CD8-positive, alpha-beta memory T cell (primary cell): ENCODE measurements at regions of chr20 and their contacts with region 1.

Region 1: GRCh38 chr20:57432874-57433491 is 41.8 kb downstream of the RBM38 start:
- DNase-seq: peak; percentile 45 to 81 (median 75)
- H3K4me3 ChIP-seq: peak overlapping the region; percentile 71
- H3K4me3 Mint-ChIP-seq: peak overlapping the region; percentile 24 to 89 (median 74)
- H3K27ac ChIP-seq: peak overlapping the region; percentile 66
- H3K27ac Mint-ChIP-seq: peak overlapping the region; percentile 81 to 97 (median 92)
- H3K4me1 ChIP-seq: peaks cover 62% of the 10 kb centered on the region
- H3K4me1 Mint-ChIP-seq: peaks cover 49 to 68% (median 64%) of the 10 kb centered on the region in 3 donors
- H3K27me3 ChIP-seq: no peaks in the 10 kb centered on the region
- H3K27me3 Mint-ChIP-seq: no peaks in the 10 kb centered on the region

Region 2: GRCh38 chr20:57361212-57361915 is 71.6 kb before region 1 on chr20:
- CTCF ChIA-PET with region 1: no interaction called
- POLR2A ChIA-PET with region 1: no interaction called
- DNase-seq: no peak
- H3K4me3 ChIP-seq: no peak overlapping the region
- H3K4me3 Mint-ChIP-seq: no peak overlapping the region
- H3K27ac ChIP-seq: no peak overlapping the region
- H3K27ac Mint-ChIP-seq: peak overlapping the region in 2 of 8 donors; percentile 21 to 23
- H3K4me1 ChIP-seq: no peaks in the 10 kb centered on the region
- H3K4me1 Mint-ChIP-seq: peaks cover 2 to 5% (median 4%) of the 10 kb centered on the region in 3 donors
- H3K27me3 ChIP-seq: no peaks in the 10 kb centered on the region
- H3K27me3 Mint-ChIP-seq: no peaks in the 10 kb centered on the region

Region 3: GRCh38 chr20:57382027-57382503 is 50.9 kb before region 1 on chr20:
- CTCF ChIA-PET with region 1: interaction called, 46 read pairs
- POLR2A ChIA-PET with region 1: interaction called, 3 read pairs
- DNase-seq: no peak
- H3K4me3 ChIP-seq: no peak overlapping the region
- H3K4me3 Mint-ChIP-seq: peak overlapping the region in 1 of 7 donors; percentile 62
- H3K27ac ChIP-seq: no peak overlapping the region
- H3K27ac Mint-ChIP-seq: peak overlapping the region; percentile 31 to 83 (median 61)
- H3K4me1 ChIP-seq: peaks cover 11% of the 10 kb centered on the region
- H3K4me1 Mint-ChIP-seq: peaks cover 24 to 44% (median 38%) of the 10 kb centered on the region in 3 donors
- H3K27me3 ChIP-seq: no peaks in the 10 kb centered on the region
- H3K27me3 Mint-ChIP-seq: no peaks in the 10 kb centered on the region

Region 4: DNA sequence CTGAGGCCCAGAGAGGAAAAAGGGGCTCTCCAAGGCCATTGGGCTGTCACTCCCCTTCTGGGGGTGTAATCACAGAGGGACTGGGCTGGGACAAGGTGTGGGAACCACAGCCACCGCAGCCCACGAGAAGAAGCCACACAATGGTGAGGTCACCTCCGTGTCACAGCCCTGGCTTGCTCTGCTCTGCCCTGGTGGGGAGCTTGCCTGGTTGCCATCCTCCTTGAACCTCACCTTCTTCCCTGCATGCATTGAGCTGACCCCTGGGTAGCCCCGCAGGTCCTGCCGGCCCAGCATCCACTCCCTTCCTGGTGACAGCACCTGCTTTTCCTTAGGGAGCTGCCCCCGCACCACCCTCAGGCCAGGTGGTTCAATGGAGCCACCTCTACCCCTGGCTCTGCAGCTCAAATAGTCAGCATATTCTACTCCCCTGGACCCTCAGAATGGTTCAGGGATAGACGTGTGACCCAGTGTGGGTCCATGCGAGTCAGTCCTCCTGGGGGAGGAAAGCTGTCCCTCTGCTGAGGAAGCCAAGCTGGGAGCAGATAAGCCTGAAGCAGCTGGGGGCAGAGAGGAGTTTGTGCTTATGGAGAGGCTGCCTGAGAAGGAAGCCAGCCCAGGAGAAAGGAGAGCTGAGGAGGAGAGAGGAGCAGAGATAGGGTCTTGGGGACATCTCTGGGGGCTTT is 20.5 kb before region 1 on chr20:
- CTCF ChIA-PET with region 1: interaction called, 11 read pairs
- POLR2A ChIA-PET with region 1: interaction called, 5 read pairs
- DNase-seq: peak in 1 of 5 donors; percentile 32
- H3K4me3 ChIP-seq: no peak overlapping the region
- H3K4me3 Mint-ChIP-seq: no peak overlapping the region
- H3K27ac ChIP-seq: peak overlapping the region; percentile 13
- H3K27ac Mint-ChIP-seq: peak overlapping the region in 7 of 8 donors; percentile 24 to 93 (median 68)
- H3K4me1 ChIP-seq: peaks cover 19% of the 10 kb centered on the region
- H3K4me1 Mint-ChIP-seq: peaks cover 16 to 41% (median 23%) of the 10 kb centered on the region in 3 donors
- H3K27me3 ChIP-seq: no peaks in the 10 kb centered on the region
- H3K27me3 Mint-ChIP-seq: peaks cover 0 to 6% of the 10 kb centered on the region in 2 donors